ENCODE measurements at regions of chr20 and their contacts with region 1.

Region 1: DNA sequence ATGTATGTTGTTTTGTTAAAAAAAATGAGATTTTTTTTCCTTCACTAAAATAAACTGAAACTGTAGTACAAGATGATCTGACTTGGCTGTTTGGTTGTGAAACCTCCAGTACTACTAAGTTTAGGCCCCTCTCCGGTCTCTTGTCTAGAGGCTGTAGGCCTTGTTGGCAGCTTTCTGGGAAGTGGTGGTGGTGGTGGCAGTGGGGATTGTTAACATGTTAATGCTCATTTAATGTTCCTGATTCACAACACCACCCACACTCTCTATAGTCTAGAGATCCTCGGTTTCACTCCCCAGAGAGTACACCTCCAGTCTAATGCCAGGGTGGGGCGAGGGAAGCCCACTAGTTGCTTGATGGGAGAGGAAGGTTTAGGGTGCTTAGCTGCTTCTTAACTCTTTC is 24.1 kb downstream of the STK4 start:
- DNase-seq: peak; percentile 81
- H3K4me3 Mint-ChIP-seq: peak overlapping the region; percentile 71
- H3K27ac Mint-ChIP-seq: peak overlapping the region; percentile 95
- H3K4me1 Mint-ChIP-seq: peaks cover 74% of the 10 kb centered on the region
- H3K27me3 Mint-ChIP-seq: no peaks in the 10 kb centered on the region

Region 2: DNA sequence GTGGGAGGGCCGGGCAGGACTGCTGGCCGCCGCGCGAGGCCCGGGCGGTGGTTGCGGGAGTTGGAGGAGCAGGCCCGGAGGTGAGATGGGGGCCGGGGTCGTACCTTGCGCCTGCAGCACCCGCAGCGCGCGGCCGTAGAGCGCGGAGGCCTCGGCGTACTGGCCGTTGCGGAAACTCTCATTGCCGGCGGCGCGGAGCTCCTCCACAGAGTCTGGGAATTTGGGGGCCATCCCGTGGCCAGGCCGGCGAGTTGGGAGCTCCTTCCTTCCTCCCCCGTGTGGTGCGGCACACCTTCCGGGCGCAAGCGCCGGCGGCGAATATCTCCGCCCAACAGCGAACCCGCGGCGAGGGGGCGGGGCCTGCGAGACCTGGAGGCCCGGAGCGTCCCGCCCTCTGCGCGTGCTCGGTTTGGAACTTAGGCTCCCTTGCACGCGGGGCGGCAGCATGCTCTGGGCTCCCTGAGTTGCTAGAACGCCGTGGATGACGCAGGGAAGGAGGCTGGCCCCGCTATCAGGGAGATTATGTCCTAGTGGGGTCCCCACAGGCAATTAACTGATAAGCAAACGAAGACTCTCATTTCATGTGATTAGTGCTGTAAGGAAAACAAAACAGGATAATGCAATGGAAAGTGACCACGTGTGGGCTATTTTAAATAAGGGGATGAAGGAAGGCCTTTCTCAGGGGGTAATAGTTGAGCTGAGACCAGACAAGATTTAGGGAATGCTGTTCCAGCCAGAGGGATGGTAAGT is 30.1 kb before region 1 on chr20 and contains the start of gene TOMM34:
- CTCF ChIA-PET with region 1: interaction called, 3 read pairs
- intact Hi-C with region 1: loop called (anchors 1 kb)
- DNase-seq: peak; percentile 96
- H3K4me3 Mint-ChIP-seq: peak within 1 kb of the TSS; percentile 93
- H3K27ac Mint-ChIP-seq: peak within 1 kb of the TSS; percentile 97
- H3K4me1 Mint-ChIP-seq: peaks cover 64% of the 10 kb centered on the region
- H3K27me3 Mint-ChIP-seq: no peaks in the 10 kb centered on the region
- total RNA-seq, gene TOMM34: 44.0 to 45.9 TPM

Region 3: GRCh38 chr20:44966030-44966961 is 24.1 kb before region 1 on chr20 and contains the start of gene STK4:
- CTCF ChIA-PET with region 1: interaction called, 3 read pairs
- intact Hi-C with region 1: loop called (anchors 1 kb)
- DNase-seq: peak; percentile 96
- H3K4me3 Mint-ChIP-seq: peak within 1 kb of the TSS; percentile 88
- H3K27ac Mint-ChIP-seq: peak within 1 kb of the TSS; percentile 98
- H3K4me1 Mint-ChIP-seq: peaks cover 56% of the 10 kb centered on the region
- H3K27me3 Mint-ChIP-seq: no peaks in the 10 kb centered on the region
- total RNA-seq, gene STK4: 110 to 116 TPM

Region 4: DNA sequence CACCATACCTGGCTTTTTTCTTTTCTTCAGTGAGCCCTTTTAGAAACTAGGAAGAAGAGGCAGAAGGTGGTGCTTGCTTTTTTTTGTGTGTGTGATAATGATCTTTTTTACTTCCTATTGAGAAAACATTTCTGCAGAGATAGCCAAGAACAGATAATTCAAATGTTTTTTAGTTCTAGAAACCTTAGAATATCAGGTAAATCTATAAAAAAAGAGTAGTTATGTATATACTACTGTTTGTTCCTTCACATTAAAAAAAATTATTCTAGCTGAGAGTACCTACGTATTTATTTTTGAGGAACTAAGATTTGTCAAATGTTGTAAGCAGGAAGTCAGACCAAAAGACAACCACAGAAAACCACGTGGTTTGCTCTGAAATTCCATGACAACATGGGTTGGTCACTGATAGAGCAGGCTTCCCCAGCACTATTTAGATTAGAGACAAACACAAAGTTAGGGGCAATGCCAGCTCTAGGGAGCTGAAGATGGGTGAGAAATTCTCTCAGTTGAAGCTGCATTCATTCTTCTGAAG is 11.3 kb before region 1 on chr20:
- CTCF ChIA-PET with region 1: no interaction called
- intact Hi-C with region 1: loop called (anchors 1 kb)
- DNase-seq: peak; percentile 80
- H3K4me3 Mint-ChIP-seq: peak overlapping the region; percentile 58
- H3K27ac Mint-ChIP-seq: peak overlapping the region; percentile 94
- H3K4me1 Mint-ChIP-seq: peaks cover 82% of the 10 kb centered on the region
- H3K27me3 Mint-ChIP-seq: no peaks in the 10 kb centered on the region

Region 5: DNA sequence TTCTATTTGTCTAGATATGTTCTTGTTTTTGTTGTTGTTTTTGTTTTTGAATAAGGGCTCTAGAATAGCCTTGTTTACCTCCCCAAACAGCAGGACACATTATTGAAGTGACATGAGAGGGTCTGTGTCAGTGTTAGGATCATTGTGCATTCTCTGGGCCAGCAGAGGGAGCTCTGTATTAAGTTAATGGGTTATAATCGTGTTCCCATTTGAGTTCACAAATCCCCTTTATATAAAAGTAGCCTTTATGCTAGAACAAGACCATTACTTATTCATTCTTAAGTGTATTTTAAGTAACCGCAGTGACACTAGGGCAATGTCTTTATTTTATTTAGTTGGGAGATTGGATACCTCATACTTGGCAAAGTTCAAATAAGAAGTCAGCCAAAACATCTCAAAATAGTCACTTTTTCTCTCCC is 20.7 kb after region 1 on chr20:
- CTCF ChIA-PET with region 1: no interaction called
- intact Hi-C with region 1: loop called (anchors 2 kb)
- DNase-seq: peak; percentile 75
- H3K4me3 Mint-ChIP-seq: no peak overlapping the region
- H3K27ac Mint-ChIP-seq: no peak overlapping the region
- H3K4me1 Mint-ChIP-seq: peaks cover 47% of the 10 kb centered on the region
- H3K27me3 Mint-ChIP-seq: no peaks in the 10 kb centered on the region

Region 6: GRCh38 chr20:45036044-45036755 is 45.8 kb after region 1 on chr20:
- CTCF ChIA-PET with region 1: interaction called, 3 read pairs
- intact Hi-C with region 1: loop called (anchors 1 kb)
- DNase-seq: peak; percentile 84
- H3K4me3 Mint-ChIP-seq: no peak overlapping the region
- H3K27ac Mint-ChIP-seq: peak overlapping the region; percentile 94
- H3K4me1 Mint-ChIP-seq: peaks cover 78% of the 10 kb centered on the region
- H3K27me3 Mint-ChIP-seq: no peaks in the 10 kb centered on the region

Measured in activated naive CD4-positive, alpha-beta T cell treated with anti-CD3 and anti-CD28 coated beads for 36 hours (primary cell).